Sigmoid colon (tissue), 7 donors: ENCODE measurements at regions of chr3 and their contacts with region 1.

Region 1: GRCh38 chr3:29693863-29694262 is 413.0 kb downstream of the RBMS3 start:
- DNase-seq: no peak
- H3K4me3 ChIP-seq: no peak overlapping the region
- H3K27ac ChIP-seq: peak overlapping the region; percentile 71 to 86 (median 84)
- H3K4me1 ChIP-seq: peaks cover 0 to 77% (median 50%) of the 10 kb centered on the region in 4 donors
- H3K27me3 ChIP-seq: no peaks in the 10 kb centered on the region
- CTCF ChIP-seq: no peak
- EP300 ChIP-seq: no peak
- POLR2A ChIP-seq: no peak

Region 2: DNA sequence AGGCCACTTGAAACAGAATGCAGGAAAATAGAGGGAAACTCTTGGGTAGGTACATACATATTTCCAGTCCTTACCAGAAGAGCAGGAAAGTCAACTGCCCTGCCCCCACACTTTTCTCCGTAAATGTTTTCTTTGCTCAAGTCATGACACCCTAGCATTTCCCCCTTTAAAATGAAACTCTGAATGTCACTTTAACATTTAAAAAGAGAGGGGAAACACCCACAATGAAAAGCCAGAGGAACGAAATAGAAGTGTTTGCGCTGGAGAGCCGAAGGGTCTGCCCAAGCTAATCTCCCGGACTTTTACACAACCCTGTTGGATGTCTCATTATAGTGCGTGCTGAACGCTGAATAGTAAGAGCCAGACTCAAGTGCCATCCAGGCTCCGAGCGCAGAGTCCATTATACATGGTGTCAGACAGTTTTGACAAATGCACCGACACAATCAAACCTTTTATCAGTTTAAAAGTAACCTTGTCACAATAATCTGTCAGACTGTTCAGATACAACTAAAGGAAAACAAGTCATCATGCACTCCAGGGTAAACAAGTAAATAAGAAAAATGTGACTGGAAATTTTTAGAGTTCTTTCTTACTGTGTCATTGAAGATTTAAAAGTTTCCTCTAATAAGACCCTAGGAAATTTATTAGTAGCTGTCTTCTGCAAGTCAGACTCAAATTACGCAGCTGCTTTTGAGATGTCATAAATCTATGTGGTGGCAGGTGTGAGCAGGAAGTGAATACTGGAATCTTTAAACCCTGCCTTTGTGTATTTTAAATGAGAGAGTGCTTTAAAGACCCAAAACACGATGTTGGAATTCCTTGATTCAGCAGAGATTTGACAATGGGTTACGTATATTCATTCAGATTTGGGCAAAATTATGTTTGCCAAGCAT is 253.2 kb before region 1 on chr3:
- intact Hi-C with region 1: no loop called
- DNase-seq: no peak
- H3K4me3 ChIP-seq: peak overlapping the region in 2 of 4 donors; percentile 11 to 28
- H3K27ac ChIP-seq: no peak overlapping the region
- H3K4me1 ChIP-seq: peaks cover 0 to 4% (median 0%) of the 10 kb centered on the region in 4 donors
- H3K27me3 ChIP-seq: no peaks in the 10 kb centered on the region
- CTCF ChIP-seq: no peak
- EP300 ChIP-seq: no peak
- POLR2A ChIP-seq: no peak

Region 3: DNA sequence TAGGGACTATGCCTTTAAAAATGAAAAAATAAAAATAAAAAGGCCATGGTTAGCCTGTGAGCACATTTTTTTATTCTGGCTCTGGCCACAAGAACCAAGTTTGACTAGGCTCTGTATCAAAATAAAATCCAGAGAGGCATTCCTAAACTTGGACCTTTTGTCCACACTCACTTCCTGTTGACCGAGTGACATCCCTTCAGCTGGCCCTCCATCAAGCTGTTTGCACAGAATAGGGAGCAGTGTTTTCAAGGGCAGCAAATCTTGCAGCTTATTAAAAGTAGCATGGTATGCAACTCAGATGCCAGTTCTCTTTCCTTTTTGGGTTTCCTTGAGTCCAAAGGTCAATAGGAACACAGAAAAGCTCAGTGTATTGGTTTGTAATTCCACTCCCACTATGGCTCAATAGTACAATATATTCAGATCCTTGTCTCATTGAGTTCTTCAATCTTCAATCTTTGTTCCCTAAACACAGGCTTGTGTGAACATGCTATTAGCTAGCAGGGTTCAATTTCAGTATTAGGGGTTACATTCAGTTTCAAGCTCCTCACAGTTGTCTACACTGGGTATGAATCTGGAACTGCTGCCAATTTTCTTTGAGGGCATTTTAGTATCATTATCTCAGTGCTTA is 168.5 kb before region 1 on chr3:
- intact Hi-C with region 1: loop called (anchors 10 kb)
- DNase-seq: peak; percentile 90
- H3K4me3 ChIP-seq: no peak overlapping the region
- H3K27ac ChIP-seq: peak overlapping the region; percentile 54 to 66 (median 61)
- H3K4me1 ChIP-seq: peaks cover 0 to 44% (median 31%) of the 10 kb centered on the region in 4 donors
- H3K27me3 ChIP-seq: no peaks in the 10 kb centered on the region
- CTCF ChIP-seq: no peak
- EP300 ChIP-seq: no peak
- POLR2A ChIP-seq: no peak

Region 4: GRCh38 chr3:30286007-30286669 is 592.3 kb after region 1 on chr3:
- intact Hi-C with region 1: no loop called
- DNase-seq: peak; percentile 85
- H3K4me3 ChIP-seq: no peak overlapping the region
- H3K27ac ChIP-seq: peak overlapping the region; percentile 20 to 67 (median 54)
- H3K4me1 ChIP-seq: peaks cover 0 to 34% (median 20%) of the 10 kb centered on the region in 4 donors
- H3K27me3 ChIP-seq: no peaks in the 10 kb centered on the region
- CTCF ChIP-seq: no peak
- EP300 ChIP-seq: no peak
- POLR2A ChIP-seq: no peak